AG04450 (cell line): ENCODE measurements at regions of chr10 and their contacts with region 1.

Region 1: DNA sequence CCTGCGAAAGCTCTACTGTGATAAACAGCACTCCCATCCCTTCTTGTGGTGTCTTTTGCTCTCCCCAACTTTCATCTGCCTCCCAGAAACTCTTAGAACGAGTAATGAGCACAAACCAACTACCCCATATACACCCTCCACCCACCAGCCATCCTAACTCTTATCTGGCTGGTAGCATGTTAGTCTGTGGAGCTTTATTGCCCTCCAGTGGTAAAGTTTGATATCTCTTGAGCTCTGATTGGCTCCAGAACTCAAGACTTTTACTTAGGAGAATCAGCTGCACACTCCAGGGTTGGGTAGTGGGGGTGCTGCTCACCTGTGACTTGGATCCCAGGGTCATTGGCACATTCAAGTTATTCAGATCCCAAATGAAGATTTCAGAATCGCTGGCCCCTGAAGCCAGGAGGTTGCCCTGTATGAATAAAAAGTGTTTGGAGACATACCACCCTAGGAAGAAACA is 10.9 kb downstream of the SEC31B start:
- DNase-seq: peak; percentile 24
- H3K4me3 ChIP-seq: no peak overlapping the region
- H3K27ac ChIP-seq: no peak overlapping the region
- H3K27me3 ChIP-seq: no peaks in the 10 kb centered on the region
- CTCF ChIP-seq: peak; percentile 78

Region 2: GRCh38 chr10:100338434-100339036 is 170.2 kb before region 1 on chr10:
- CTCF ChIA-PET with region 1: interaction called, 56 read pairs
- POLR2A ChIA-PET with region 1: no interaction called
- DNase-seq: no peak
- H3K4me3 ChIP-seq: no peak overlapping the region
- H3K27ac ChIP-seq: no peak overlapping the region
- H3K27me3 ChIP-seq: peaks cover 12% of the 10 kb centered on the region
- CTCF ChIP-seq: peak; percentile 96

Region 3: DNA sequence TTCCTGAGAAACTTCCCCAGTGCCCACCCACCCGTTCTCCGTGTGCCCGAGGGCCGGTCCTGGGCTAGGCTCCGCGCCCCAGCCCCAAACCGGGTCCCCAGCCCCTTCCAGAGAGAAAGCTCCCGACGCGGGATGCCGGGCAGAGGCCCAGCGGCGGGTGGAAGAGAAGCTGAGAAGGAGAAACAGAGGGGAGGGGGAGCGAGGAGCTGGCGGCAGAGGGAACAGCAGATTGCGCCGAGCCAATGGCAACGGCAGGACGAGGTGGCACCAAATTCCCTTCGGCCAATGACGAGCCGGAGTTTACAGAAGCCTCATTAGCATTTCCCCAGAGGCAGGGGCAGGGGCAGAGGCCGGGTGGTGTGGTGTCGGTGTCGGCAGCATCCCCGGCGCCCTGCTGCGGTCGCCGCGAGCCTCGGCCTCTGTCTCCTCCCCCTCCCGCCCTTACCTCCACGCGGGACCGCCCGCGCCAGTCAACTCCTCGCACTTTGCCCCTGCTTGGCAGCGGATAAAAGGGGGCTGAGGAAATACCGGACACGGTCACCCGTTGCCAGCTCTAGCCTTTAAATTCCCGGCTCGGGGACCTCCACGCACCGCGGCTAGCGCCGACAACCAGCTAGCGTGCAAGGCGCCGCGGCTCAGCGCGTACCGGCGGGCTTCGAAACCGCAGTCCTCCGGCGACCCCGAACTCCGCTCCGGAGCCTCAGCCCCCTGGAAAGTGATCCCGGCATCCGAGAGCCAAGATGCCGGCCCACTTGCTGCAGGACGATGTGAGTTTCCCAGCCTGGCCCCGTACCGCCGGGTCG is 161.8 kb before region 1 on chr10 and contains the start of gene SCD:
- CTCF ChIA-PET with region 1: interaction called, 56 read pairs
- POLR2A ChIA-PET with region 1: no interaction called
- DNase-seq: peak; percentile 72
- H3K4me3 ChIP-seq: peak within 1 kb of the TSS; percentile 86
- H3K27ac ChIP-seq: peak within 1 kb of the TSS; percentile 57
- H3K27me3 ChIP-seq: no peaks in the 10 kb centered on the region
- CTCF ChIP-seq: no peak
- polyA plus RNA-seq, gene SCD: 133 and 148 TPM in 2 replicates

Region 4: GRCh38 chr10:100438674-100439315 is 69.9 kb before region 1 on chr10:
- CTCF ChIA-PET with region 1: interaction called, 137 read pairs
- POLR2A ChIA-PET with region 1: no interaction called
- DNase-seq: no peak
- H3K4me3 ChIP-seq: no peak overlapping the region
- H3K27ac ChIP-seq: no peak overlapping the region
- H3K27me3 ChIP-seq: no peaks in the 10 kb centered on the region
- CTCF ChIP-seq: no peak

Region 5: GRCh38 chr10:100481462-100482081 is 27.1 kb before region 1 on chr10:
- CTCF ChIA-PET with region 1: interaction called, 30 read pairs
- POLR2A ChIA-PET with region 1: no interaction called
- DNase-seq: peak; percentile 59
- H3K4me3 ChIP-seq: peak overlapping the region; percentile 53
- H3K27ac ChIP-seq: no peak overlapping the region
- H3K27me3 ChIP-seq: peaks cover 67% of the 10 kb centered on the region
- CTCF ChIP-seq: no peak

Region 6: GRCh38 chr10:100697070-100697469 is 188.3 kb after region 1 on chr10:
- CTCF ChIA-PET with region 1: no interaction called
- POLR2A ChIA-PET with region 1: no interaction called
- DNase-seq: no peak
- H3K4me3 ChIP-seq: no peak overlapping the region
- H3K27ac ChIP-seq: no peak overlapping the region
- H3K27me3 ChIP-seq: peaks cover 7% of the 10 kb centered on the region
- CTCF ChIP-seq: no peak